Posterior vena cava (tissue), 2 donors: ENCODE measurements at regions of chr4 and their contacts with region 1.

Region 1: DNA sequence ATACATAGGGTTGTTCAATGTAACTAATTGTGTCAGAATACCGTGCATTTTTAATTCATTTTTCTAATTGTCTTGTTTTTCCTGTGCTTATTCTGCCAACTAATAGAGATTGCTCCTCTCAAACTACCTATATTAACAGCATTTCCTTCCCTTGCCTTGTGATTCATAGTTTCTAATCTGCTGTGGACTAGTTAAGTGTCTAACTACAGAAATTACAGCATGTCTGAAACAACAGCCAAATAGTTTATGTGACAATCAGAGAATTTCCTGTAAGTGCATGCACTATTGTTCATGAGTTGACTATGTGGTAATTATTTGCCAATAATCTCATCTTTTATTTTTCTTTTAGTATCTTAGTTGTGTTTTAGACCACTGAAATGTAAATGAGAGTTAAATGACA is 4.1 kb upstream of the SEC24B start:
- DNase-seq: no peak

Region 2: GRCh38 chr4:107719922-107720722 is 1709.4 kb before region 1 on chr4 and contains the start of gene PAPSS1:
- intact Hi-C with region 1: loop called in 1 of 2 experiments (anchors 5 kb)
- DNase-seq: peak; percentile 99
- total RNA-seq, gene PAPSS1: 31.6 to 32.5 TPM